ENCODE measurements at regions of chr3 and their contacts with region 1.

Region 1: DNA sequence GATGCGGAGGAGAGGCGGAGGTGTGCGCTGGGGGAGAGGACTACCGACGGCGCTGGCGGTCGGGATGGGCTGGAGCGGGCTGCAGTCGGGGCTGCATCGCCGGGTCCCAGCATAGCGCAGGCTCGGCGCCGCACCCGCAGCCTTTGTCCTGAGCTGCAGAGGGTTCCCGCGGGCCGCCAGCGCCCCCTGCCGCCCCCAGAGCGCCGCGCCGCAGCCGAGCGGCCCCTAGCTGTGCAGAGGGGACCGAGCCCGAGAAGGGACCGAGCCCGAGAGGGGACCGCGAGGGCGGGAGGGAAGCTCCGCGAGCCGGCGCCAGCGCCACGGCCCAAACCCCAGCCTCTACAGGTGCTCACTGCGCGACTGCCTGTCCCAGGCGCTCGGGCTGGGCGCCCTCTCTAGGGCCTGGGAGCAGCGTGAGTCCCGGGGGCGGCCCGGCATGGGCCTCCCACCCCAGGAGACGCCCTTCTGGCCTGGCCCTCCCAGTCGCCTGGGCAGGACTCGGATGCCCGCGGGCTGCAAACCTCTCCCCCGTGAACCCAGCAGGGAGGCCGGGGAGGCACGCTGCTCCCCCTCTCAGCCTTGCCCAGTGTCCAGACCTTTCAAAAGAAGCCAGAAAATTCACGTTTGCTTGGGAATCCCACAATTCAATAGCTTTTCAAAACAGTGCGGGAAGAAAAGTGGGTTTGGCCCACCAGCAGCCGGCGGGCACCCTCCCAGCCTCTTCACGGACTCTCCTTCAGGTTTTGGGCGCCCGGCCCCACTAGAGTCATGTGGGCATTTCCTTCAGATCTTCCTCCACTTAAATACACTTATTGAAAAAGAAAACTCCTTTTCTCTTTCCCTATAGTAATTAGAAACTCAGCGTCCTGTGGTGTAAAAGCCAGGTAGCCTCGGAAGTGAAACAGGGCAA is 134.7 kb downstream of the TPRA1 start:
- DNase-seq: peak; percentile 45 to 79
- ATAC-seq: peak; percentile 93 to 99
- H3K4me3 ChIP-seq: peak overlapping the region; percentile 32; the same call in 2 of the 3 replicates
- H3K27ac ChIP-seq: peak overlapping the region; percentile 40 to 74; a peak in 4 of 6 replicates
- H3K4me1 ChIP-seq: no peaks in the 10 kb centered on the region
- CTCF ChIP-seq: peak; percentile 88
- EP300 ChIP-seq: no peak
- POLR2A ChIP-seq: no peak
- RAD21 ChIP-seq: peak; percentile 72 to 95

Region 2: DNA sequence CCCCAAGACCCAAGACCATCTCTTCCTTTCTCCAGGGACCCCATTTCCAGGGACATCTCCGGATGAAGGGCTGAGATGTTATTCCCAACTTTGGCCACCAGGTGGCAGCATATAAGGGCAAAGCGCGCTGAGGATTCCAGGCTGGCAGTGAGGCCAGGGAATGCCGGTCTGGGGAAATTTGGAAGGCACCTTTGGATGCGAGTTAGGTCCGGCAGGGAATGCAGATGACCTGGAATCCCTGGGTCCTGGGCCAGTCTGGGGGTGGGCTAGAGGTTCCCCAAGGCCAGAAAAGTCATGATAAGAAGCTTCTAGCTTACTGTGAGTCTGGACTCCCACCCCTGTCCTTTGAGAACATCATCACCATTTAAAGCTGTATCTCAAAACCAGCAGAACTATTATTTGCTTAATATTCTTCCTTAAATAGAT is 933.4 kb before region 1 on chr3:
- CTCF ChIA-PET with region 1: interaction called, 13 read pairs
- POLR2A ChIA-PET with region 1: no interaction called
- DNase-seq: peak; percentile 41 to 64
- ATAC-seq: peak; percentile 32 to 65; a peak in 4 of 6 replicates
- H3K4me3 ChIP-seq: no peak overlapping the region
- H3K27ac ChIP-seq: no peak overlapping the region
- H3K4me1 ChIP-seq: 0 out of 3 replicates have a peak, but pooled peaks cover 7% of the 10 kb centered on the region
- CTCF ChIP-seq: peak; percentile 70
- EP300 ChIP-seq: no peak
- POLR2A ChIP-seq: no peak
- RAD21 ChIP-seq: peak; percentile 61 to 66

Region 3: GRCh38 chr3:127471142-127471541 is 15.3 kb after region 1 on chr3:
- CTCF ChIA-PET with region 1: interaction called, 11 read pairs
- POLR2A ChIA-PET with region 1: no interaction called
- DNase-seq: no peak
- ATAC-seq: no peak
- H3K4me3 ChIP-seq: no peak overlapping the region
- H3K27ac ChIP-seq: no peak overlapping the region
- H3K4me1 ChIP-seq: no peaks in the 10 kb centered on the region
- CTCF ChIP-seq: no peak
- EP300 ChIP-seq: no peak
- POLR2A ChIP-seq: no peak
- RAD21 ChIP-seq: no peak

Region 4: GRCh38 chr3:127544192-127544802 is 88.5 kb after region 1 on chr3:
- CTCF ChIA-PET with region 1: interaction called, 27 read pairs
- POLR2A ChIA-PET with region 1: no interaction called
- DNase-seq: peak; percentile 70 to 86
- ATAC-seq: peak; percentile 81 to 89
- H3K4me3 ChIP-seq: no peak overlapping the region
- H3K27ac ChIP-seq: no peak overlapping the region; a peak in 1 of 6 replicates
- H3K4me1 ChIP-seq: peaks cover 7% of the 10 kb centered on the region; the same call in 1 of the 3 replicates
- CTCF ChIP-seq: peak; percentile 64
- EP300 ChIP-seq: no peak
- POLR2A ChIP-seq: no peak
- RAD21 ChIP-seq: peak; percentile 66 to 71